Vagina (tissue), 2 donors: ENCODE measurements at regions of chr3 and their contacts with region 1.

Region 1: GRCh38 chr3:44353355-44353924 is 14.9 kb downstream of the TCAIM start:
- DNase-seq: no peak
- H3K4me3 ChIP-seq: no peak overlapping the region
- H3K27ac ChIP-seq: no peak overlapping the region
- H3K4me1 ChIP-seq: no peaks in the 10 kb centered on the region
- H3K27me3 ChIP-seq: no peaks in the 10 kb centered on the region
- CTCF ChIP-seq: no peak
- POLR2A ChIP-seq: no peak

Region 2: DNA sequence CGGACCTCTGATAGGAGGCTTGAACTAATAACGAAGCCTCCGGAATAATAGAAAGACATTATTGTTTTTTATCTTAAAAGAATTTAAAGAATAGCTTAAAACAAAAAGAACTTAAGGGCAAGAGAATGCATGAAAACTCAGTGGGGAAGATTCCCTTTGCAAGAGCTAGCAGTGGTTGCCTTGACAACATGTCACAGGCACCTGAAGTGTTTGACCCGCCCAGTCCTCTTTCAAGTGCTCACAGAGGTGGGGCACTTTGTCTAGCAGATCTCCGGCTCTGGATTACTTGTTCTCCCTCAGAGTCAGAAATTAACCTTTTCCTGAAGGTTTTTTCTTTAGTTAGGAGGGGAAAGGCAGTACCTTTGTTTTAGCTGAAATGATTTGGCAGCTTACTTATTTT is 1072.7 kb after region 1 on chr3:
- intact Hi-C with region 1: loop called (anchors 5 kb)
- DNase-seq: no peak
- H3K4me3 ChIP-seq: no peak overlapping the region
- H3K27ac ChIP-seq: no peak overlapping the region
- H3K4me1 ChIP-seq: no peaks in the 10 kb centered on the region
- H3K27me3 ChIP-seq: no peaks in the 10 kb centered on the region
- CTCF ChIP-seq: no peak
- POLR2A ChIP-seq: no peak